ENCODE measurements at regions of chr16 and their contacts with region 1.

Region 1: DNA sequence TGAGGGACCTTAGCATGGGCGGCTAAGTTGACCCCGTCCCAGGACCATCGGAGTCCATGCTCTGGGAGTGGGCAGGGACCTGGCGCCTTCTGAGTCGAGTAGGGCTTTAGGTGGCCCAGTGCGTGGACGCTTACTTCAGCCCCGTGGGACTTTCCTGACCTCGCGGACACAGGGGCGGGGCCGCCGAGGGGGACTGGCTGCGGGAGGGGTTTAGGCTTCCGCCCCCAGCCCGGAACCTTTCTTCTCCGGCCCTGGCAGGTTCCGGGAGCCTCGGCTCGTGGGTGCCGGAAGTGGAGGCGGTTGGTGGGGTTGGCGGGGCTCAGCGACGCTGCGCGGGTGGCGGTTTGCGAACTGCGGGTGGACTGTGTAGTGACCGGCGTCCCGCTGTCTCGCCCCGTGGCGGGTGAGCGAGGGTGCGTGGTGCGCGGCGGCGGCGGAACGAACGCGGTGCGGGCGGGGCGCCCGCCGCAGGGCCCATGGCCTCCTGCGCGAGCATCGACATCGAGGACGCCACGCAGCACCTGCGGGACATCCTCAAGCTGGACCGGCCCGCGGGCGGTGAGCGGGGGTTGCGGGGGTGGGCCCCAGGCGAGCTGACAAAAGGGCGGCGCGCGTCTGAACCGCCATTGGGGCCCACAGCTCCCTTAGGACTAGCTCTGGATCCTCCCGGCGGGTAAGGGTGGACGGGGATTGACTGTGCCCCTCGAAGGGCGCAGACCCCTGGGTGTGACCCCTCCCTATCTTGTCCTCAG is at the start of gene EDC4:
- DNase-seq: peak; percentile 90
- H3K4me3 Mint-ChIP-seq: peak within 1 kb of the TSS; percentile 91
- H3K27ac Mint-ChIP-seq: peak within 1 kb of the TSS; percentile 88
- H3K4me1 Mint-ChIP-seq: peaks cover 35% of the 10 kb centered on the region
- H3K27me3 Mint-ChIP-seq: no peaks in the 10 kb centered on the region
- total RNA-seq, gene EDC4: 98.4 to 99.3 TPM

Region 2: DNA sequence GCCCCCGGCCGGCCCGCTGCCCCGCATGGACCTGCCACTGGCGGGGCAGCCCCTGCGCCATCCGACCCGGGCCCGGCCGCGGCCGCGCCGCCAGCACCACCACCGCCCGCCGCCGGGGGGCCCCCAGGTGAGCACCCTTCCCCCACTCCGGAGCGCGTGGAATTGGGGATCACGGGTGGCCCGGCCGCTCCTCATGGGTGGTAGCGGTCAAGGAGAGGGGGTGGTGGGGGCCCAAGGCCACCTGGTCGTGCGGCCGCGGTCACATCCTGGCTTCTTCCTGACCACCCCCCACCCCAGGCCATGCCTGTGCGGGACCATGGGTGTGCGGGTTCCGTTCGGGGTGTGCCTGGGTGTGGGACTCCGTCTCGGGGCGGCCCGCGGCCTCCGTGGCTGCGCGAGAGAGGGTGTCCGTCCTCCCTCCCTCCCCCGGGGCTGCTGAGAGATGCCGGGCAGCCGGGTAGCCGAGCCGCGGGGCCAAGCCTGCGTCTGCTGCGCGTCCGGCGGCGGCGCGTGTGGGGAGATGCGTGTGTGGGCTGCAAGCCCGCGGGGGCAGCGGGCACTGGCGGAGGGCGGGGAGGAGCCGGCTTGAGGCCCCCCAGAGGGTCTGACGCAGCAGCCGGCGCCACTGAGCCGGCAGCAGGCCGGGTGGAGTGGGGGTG is 219.7 kb before region 1 on chr16:
- CTCF ChIA-PET with region 1: no interaction called
- POLR2A ChIA-PET with region 1: no interaction called
- DNase-seq: no peak
- H3K4me3 Mint-ChIP-seq: no peak overlapping the region
- H3K27ac Mint-ChIP-seq: no peak overlapping the region
- H3K4me1 Mint-ChIP-seq: peaks cover 15% of the 10 kb centered on the region
- H3K27me3 Mint-ChIP-seq: no peaks in the 10 kb centered on the region

Region 3: GRCh38 chr16:67825119-67825518 is 47.8 kb before region 1 on chr16:
- CTCF ChIA-PET with region 1: no interaction called
- POLR2A ChIA-PET with region 1: no interaction called
- DNase-seq: no peak
- H3K4me3 Mint-ChIP-seq: no peak overlapping the region
- H3K27ac Mint-ChIP-seq: no peak overlapping the region
- H3K4me1 Mint-ChIP-seq: no peaks in the 10 kb centered on the region
- H3K27me3 Mint-ChIP-seq: no peaks in the 10 kb centered on the region

Region 4: GRCh38 chr16:67846320-67847063 is 26.5 kb before region 1 on chr16 and contains the start of gene NUTF2:
- CTCF ChIA-PET with region 1: no interaction called
- POLR2A ChIA-PET with region 1: interaction called, 10 read pairs
- DNase-seq: peak; percentile 97
- H3K4me3 Mint-ChIP-seq: peak within 1 kb of the TSS; percentile 89
- H3K27ac Mint-ChIP-seq: peak within 1 kb of the TSS; percentile 79
- H3K4me1 Mint-ChIP-seq: peaks cover 52% of the 10 kb centered on the region
- H3K27me3 Mint-ChIP-seq: no peaks in the 10 kb centered on the region
- total RNA-seq, gene NUTF2: 96.4 to 101 TPM

Measured in activated CD4-positive, alpha-beta memory T cell treated with anti-CD3 and anti-CD28 coated beads, Interleukin-2, amount 10 ng/mL, durations not matched to agents 7 days and 5 days (primary cell).